Activated B cell treated with CpG ODN at 0.5 μM for 24 hours (primary cell): ENCODE measurements at regions of chr2 and their contacts with region 1.

Region 1: DNA sequence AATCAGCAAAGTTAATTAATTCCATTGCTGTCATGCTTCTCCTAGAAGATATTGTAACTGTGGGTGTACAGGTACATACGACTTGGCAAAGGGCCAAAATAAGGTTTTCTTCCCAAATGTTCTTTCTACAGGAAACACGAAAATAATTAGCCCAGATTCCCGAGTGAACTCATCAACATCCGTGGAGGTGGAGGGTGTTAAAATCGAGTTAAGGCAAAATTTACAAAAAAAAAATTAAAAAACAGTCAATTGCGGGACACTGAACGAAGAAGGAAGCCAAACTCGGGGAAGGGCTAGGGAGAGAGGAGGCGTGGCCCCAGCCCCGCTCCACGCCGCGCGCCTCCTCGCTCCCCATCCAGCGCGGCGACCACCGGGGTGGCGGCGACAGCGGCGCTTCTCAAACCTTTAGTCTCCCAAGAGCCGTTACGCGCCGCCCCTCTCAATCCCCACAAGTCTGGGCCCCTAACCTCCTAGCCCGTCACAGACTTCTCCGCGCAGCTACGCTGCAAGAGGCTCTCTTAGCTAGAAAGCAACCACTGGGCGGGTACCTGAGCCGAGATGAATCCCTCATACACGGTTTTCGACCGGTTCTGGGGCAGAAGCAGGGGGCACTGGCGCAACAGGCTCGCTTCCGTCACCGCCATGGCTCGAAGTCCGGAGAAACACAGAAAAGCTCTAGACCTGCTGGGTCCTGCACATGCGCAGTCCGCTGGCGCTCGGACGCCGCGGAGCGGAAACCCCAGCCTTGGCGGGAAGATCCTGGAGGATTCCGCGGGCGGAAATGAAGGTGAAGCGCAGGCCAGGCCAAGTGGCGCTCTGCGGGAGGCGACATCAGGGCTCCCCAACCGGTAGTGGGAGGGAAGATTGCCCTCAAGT is at the start of gene FANCL:
- DNase-seq: peak; percentile 71
- ATAC-seq: peak; percentile 84
- H3K4me3 Mint-ChIP-seq: peak within 1 kb of the TSS; percentile 92
- H3K27ac Mint-ChIP-seq: peak within 1 kb of the TSS; percentile 86
- H3K4me1 Mint-ChIP-seq: peaks cover 36% of the 10 kb centered on the region
- H3K27me3 Mint-ChIP-seq: no peaks in the 10 kb centered on the region
- CTCF ChIP-seq: no peak
- total RNA-seq, gene FANCL: 17.8 and 18.4 TPM in 2 replicates

Region 2: DNA sequence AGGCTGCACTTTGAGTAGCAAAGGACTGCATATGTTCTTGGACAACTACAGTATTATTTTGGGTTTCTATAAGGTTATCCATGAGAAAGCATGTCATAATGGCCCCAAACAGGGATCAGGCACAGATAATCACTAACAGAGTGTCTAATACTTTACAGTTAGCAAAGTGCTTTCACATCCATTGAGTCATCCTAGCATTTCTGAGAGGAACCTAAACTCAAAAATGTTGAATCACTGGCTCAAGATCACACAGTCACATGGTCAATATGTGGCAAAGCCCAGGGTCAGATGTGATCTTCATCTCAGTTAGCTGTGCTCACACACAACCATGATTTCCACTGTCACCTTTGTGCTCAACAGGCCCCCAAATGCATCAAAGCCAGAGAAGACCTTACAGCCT is 350.4 kb before region 1 on chr2:
- CTCF ChIA-PET with region 1: no interaction called
- POLR2A ChIA-PET with region 1: no interaction called
- intact Hi-C with region 1: loop called (anchors 5 kb)
- DNase-seq: no peak
- ATAC-seq: no peak
- H3K4me3 Mint-ChIP-seq: no peak overlapping the region
- H3K27ac Mint-ChIP-seq: no peak overlapping the region
- H3K4me1 Mint-ChIP-seq: peaks cover 16% of the 10 kb centered on the region
- H3K27me3 Mint-ChIP-seq: no peaks in the 10 kb centered on the region
- CTCF ChIP-seq: no peak

Region 3: DNA sequence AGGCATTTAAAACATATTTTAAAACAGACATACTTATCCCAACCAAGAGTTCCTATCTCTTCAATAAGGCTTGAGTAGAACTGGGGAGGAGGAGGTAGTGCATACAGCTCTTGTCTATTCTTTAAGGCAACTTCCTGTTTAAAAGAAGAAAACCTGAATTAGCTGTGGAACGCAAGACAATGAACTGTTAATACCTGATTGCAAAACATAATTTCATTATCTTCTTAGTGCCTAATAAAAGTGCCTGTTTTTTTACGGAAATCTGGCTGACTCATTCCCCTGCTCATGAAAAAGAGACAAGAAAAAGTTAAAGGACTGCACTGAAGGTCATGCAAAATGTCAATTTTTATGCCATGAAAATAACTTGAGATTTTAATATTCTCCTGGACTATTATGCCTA is 19.0 kb before region 1 on chr2:
- CTCF ChIA-PET with region 1: no interaction called
- POLR2A ChIA-PET with region 1: no interaction called
- intact Hi-C with region 1: loop called (anchors 2 kb)
- DNase-seq: no peak
- ATAC-seq: no peak
- H3K4me3 Mint-ChIP-seq: no peak overlapping the region
- H3K27ac Mint-ChIP-seq: no peak overlapping the region
- H3K4me1 Mint-ChIP-seq: no peaks in the 10 kb centered on the region
- H3K27me3 Mint-ChIP-seq: no peaks in the 10 kb centered on the region
- CTCF ChIP-seq: no peak